ENCODE measurements at regions of chr17 and their contacts with region 1.

Region 1: GRCh38 chr17:40303009-40303657 is 5.8 kb upstream of the RARA start:
- DNase-seq: peak; percentile 71
- H3K4me3 ChIP-seq: no peak overlapping the region
- H3K27ac ChIP-seq: no peak overlapping the region
- H3K4me1 ChIP-seq: peaks cover 9% of the 10 kb centered on the region
- H3K27me3 ChIP-seq: no peaks in the 10 kb centered on the region
- CTCF ChIP-seq: peak; percentile 70

Region 2: DNA sequence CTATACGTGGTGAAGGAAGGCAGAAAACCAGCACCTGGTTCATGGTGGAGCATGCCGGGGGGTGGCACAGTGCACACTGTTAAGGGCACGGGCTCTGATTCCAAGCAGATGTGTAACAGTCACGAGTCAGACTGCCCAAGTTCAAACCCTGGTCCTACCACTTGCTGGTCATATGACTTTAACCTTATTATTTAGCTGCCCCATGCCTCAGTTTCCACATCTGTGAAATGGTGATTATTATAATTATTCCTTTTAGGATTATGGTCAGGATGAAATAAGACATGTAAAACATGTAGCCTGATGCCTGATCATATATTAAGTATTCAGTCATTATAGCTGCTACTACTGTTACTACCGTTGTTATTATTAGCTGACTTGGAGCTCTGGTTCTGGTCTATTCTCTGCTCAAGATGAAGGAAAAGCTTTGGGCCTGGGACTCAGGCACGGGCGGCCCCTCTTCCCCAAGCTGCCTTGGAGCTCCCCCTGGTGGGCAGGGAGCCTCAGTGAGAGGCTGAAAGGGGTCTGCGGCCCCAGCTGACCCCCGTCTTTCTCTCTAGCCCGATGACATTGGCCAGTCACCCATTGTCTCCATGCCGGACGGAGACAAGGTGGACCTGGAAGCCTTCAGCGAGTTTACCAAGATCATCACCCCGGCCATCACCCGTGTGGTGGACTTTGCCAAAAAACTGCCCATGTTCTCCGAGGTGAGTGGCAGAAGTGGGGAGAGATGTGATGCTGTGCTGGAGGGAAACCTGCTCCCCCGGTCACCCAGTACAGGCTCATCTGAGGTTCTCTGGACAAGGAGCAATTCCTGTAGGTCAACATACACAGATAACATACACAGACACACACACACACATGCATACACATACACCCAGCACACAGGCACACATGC is 216.7 kb before region 1 on chr17:
- intact Hi-C with region 1: no loop called
- DNase-seq: no peak
- H3K4me3 ChIP-seq: no peak overlapping the region
- H3K27ac ChIP-seq: no peak overlapping the region
- H3K4me1 ChIP-seq: no peaks in the 10 kb centered on the region
- H3K27me3 ChIP-seq: no peaks in the 10 kb centered on the region
- CTCF ChIP-seq: peak; percentile 78

Region 3: DNA sequence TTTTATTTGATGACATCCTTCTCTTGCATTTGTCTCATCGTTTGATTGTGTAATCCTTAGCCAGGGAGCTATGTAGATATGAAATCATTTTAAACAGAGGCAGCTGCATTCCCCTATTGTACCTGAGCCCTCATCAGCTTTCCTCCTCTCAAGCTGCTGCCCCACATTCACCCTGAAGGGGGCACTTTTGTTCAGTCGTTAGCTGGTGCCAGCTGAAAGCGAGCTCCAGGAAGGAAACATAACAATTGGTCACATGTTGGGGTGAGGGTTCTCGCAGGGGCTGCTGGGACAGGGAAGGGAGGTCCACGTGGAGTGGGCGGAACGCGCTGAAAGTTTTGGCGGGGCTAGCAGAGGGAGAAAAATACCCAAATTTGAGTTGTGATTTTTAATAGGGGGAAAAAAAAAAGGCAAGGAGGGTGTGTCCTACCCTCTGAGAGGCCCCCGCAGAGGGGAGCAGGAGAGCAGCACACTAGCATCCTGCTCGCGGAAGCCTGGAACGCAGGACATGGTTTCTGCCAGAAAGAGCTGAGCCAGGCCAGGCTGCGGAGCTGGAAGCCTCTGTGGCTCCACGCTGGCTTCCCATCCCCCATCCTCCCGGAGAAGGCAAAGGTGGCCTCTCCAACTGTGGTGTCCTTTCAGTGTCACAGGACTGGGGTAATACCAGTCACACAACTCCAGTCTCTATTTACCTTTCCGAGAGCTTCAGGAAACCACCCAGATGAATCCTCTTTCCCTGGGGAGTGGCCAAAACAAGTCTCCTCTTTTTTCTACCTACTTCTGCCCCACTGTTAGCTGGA is 189.8 kb before region 1 on chr17:
- intact Hi-C with region 1: no loop called
- DNase-seq: peak; percentile 98
- H3K4me3 ChIP-seq: peak overlapping the region; percentile 36
- H3K27ac ChIP-seq: peak overlapping the region; percentile 93
- H3K4me1 ChIP-seq: peaks cover 37% of the 10 kb centered on the region
- H3K27me3 ChIP-seq: no peaks in the 10 kb centered on the region
- CTCF ChIP-seq: peak; percentile 76

Region 4: DNA sequence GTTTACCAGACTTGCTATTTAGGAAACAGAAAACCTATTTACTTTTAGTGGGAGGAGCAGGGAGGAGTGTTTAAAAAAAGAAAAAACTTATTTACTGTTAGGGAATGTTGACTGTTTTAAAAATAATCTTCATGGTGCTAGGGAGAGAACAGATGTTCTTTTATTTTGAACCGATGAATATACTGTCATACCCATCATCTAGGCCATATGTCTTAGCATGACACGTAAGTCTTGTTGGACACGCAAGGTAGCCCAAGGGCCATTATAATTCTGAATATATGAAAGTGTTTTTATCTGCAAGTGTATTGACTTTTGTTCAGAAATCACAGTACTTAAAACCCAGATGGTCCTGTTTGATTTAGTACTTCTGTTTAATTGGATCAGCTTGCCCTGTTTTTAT is 72.5 kb before region 1 on chr17:
- intact Hi-C with region 1: no loop called
- DNase-seq: no peak
- H3K4me3 ChIP-seq: no peak overlapping the region
- H3K27ac ChIP-seq: no peak overlapping the region
- H3K4me1 ChIP-seq: no peaks in the 10 kb centered on the region
- H3K27me3 ChIP-seq: no peaks in the 10 kb centered on the region
- CTCF ChIP-seq: no peak

Region 5: GRCh38 chr17:40347319-40348135 is 44.4 kb after region 1 on chr17:
- intact Hi-C with region 1: loop called (anchors 2 kb)
- DNase-seq: no peak
- H3K4me3 ChIP-seq: no peak overlapping the region
- H3K27ac ChIP-seq: peak overlapping the region; percentile 96
- H3K4me1 ChIP-seq: peaks cover 36% of the 10 kb centered on the region
- H3K27me3 ChIP-seq: no peaks in the 10 kb centered on the region
- CTCF ChIP-seq: no peak

Region 6: DNA sequence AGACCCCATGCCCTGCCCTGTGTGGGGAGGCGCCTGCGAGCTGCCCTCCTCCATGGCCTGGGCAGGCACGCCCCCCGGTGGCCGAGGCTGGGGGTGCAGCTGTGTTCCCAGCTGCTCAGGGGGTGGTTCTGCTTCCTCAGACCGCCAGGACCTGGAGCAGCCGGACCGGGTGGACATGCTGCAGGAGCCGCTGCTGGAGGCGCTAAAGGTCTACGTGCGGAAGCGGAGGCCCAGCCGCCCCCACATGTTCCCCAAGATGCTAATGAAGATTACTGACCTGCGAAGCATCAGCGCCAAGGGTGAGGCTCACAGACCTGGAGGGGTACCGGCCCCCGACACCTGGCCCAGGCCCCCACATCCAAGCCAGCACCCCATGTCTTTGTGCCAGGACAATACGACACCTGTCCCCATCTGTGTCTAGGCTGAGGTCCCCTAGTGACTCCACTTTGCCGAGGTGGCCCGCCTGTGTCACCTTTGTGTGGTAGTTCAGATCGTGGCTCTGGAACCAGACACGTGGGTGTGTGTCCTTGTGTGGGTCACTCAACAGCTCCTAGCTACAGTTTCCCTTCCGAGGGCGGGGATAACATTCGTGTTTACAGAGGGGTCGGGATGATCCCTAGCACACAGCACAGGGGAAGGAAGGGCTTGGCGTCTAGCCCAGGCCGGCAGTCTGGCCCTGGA is 52.1 kb after region 1 on chr17:
- intact Hi-C with region 1: loop called (anchors 1 kb)
- DNase-seq: peak; percentile 79
- H3K4me3 ChIP-seq: no peak overlapping the region
- H3K27ac ChIP-seq: no peak overlapping the region
- H3K4me1 ChIP-seq: no peaks in the 10 kb centered on the region
- H3K27me3 ChIP-seq: no peaks in the 10 kb centered on the region
- CTCF ChIP-seq: peak; percentile 95

Region 7: DNA sequence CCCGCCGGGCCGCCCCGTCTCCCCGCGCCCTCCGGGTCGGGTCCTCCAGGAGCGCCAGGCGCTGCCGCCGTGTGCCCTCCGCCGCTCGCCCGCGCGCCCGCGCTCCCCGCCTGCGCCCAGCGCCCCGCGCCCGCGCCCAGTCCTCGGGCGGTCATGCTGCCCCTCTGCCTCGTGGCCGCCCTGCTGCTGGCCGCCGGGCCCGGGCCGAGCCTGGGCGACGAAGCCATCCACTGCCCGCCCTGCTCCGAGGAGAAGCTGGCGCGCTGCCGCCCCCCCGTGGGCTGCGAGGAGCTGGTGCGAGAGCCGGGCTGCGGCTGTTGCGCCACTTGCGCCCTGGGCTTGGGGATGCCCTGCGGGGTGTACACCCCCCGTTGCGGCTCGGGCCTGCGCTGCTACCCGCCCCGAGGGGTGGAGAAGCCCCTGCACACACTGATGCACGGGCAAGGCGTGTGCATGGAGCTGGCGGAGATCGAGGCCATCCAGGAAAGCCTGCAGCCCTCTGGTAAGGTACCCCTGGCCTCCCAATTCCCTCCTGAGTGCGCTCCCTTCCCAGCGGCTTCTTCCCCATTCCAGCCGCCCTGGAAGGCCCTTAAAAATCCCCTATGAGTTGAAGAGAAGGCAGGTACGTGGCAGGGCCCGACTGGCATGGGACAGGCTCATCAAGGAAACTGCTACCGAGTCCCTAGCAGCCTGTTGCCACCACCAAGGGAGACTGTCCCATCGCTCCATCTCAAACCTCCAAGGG is 140.6 kb after region 1 on chr17:
- intact Hi-C with region 1: no loop called
- DNase-seq: peak; percentile 86
- H3K4me3 ChIP-seq: peak overlapping the region; percentile 74
- H3K27ac ChIP-seq: peak overlapping the region; percentile 78
- H3K4me1 ChIP-seq: peaks cover 14% of the 10 kb centered on the region
- H3K27me3 ChIP-seq: no peaks in the 10 kb centered on the region
- CTCF ChIP-seq: peak; percentile 23

Measured in colonic mucosa (tissue), 4 donors.